ENCODE measurements at regions of chr15 and their contacts with region 1.

Region 1: DNA sequence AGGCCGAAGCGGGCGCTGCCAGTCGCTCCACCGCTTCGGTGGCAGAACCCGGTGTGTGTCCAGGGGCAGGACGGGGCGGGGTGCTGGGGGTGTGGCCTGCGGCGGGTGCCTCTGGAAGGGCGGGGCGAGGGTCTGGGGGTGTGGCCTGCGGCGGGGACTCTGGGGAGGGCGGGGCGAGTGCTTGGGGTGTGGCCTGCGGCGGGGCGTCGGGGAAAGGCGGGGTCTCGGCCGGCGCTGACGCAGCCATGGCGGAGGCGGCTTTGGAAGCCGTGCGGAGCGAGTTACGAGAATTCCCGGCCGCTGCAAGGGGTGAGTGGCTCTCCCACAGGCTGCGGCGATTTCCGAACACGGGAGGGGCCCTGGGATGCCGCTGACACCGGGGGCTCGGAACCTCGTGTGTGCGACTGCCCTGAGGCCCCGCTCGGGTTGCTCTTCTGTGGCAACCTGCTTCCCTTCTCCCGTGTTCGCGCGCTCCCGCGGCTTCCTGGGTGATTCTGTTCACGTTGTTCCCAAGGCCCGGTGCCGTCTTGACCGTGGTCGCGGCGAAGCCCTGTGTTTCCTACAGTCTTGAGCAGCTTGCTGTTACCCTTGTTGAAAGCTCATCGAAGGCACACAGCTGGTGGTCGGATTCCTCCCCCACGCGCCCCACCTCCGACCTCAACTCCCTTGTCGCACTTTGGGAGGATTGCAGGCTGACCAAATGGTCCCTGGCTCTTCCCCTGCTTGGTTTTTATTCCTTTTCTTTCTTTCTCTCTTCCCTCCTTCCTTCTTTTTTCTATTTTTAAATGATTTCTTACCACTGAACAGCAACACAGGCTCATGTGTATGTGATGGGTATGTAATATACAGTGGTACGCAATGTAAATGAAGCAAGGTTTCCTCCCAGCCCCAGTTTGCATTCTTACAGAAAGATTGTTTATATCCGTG is at the start of gene JMJD7:
- DNase-seq: peak; percentile 96 to 98 (median 96)
- ATAC-seq: peak; percentile 94 to 97 (median 96)
- H3K4me3 ChIP-seq: peak within 1 kb of the TSS; percentile 52 to 88 (median 76)
- H3K27ac ChIP-seq: peak within 1 kb of the TSS; percentile 22 to 89 (median 84)
- H3K4me1 ChIP-seq: peaks cover 0 to 26% (median 16%) of the 10 kb centered on the region in 12 donors
- H3K27me3 ChIP-seq: no peaks in the 10 kb centered on the region
- CTCF ChIP-seq: no peak
- POLR2A ChIP-seq: peak in 1 of 2 donors; percentile 85
- total RNA-seq, gene JMJD7: 5.4 to 17.9 (median 11.8) TPM

Region 2: GRCh38 chr15:41870689-41871081 is 42.5 kb after region 1 on chr15:
- intact Hi-C with region 1: loop called in 1 of 10 experiments (anchors 5 kb)
- DNase-seq: peak in 1 of 5 donors; percentile 74
- ATAC-seq: peak; percentile 26 to 58 (median 47)
- H3K4me3 ChIP-seq: no peak overlapping the region
- H3K27ac ChIP-seq: no peak overlapping the region
- H3K4me1 ChIP-seq: peaks cover 0 to 11% (median 0%) of the 10 kb centered on the region in 12 donors
- H3K27me3 ChIP-seq: no peaks in the 10 kb centered on the region
- CTCF ChIP-seq: no peak
- POLR2A ChIP-seq: no peak

Region 3: GRCh38 chr15:41894791-41895463 is 66.8 kb after region 1 on chr15:
- intact Hi-C with region 1: loop called in 8 of 10 experiments (anchors 2 to 5 kb)
- DNase-seq: peak; percentile 83 to 92 (median 90)
- ATAC-seq: peak; percentile 77 to 90 (median 85)
- H3K4me3 ChIP-seq: peak overlapping the region in 10 of 12 donors; percentile 20 to 67 (median 56)
- H3K27ac ChIP-seq: peak overlapping the region; percentile 18 to 96 (median 88)
- H3K4me1 ChIP-seq: peaks cover 9 to 35% (median 26%) of the 10 kb centered on the region in 12 donors
- H3K27me3 ChIP-seq: no peaks in the 10 kb centered on the region
- CTCF ChIP-seq: peak in 5 of 12 donors; percentile 19 to 48 (median 31)
- POLR2A ChIP-seq: no peak

Region 4: DNA sequence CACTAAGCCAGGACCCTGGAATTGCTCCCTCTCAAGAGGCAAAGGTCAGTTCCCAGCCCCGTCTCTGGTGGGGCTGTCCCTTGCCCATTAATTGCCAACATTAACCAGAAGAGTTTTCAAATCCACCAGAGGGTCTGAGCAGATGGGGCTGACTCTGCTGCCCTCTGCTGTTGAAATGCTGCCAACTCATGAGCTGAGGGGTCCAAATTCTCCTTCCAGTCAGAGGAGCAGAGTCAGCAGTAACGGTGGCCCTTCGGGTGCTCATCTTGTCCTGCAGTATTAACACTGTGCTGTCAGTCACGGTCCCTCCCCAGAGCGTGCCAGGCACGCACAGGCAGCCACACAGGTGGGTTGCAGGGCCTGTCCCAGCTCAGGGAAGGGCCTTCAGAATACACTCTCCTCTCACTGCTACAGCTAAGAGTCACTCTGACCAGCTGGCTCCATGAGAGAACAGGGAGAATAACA is 76.4 kb after region 1 on chr15:
- intact Hi-C with region 1: loop called in 4 of 10 experiments (anchors 5 kb)
- DNase-seq: peak in 4 of 5 donors; percentile 63 to 67 (median 65)
- ATAC-seq: peak; percentile 48 to 75 (median 64)
- H3K4me3 ChIP-seq: no peak overlapping the region
- H3K27ac ChIP-seq: peak overlapping the region in 9 of 12 donors; percentile 20 to 67 (median 42)
- H3K4me1 ChIP-seq: peaks cover 0 to 40% (median 21%) of the 10 kb centered on the region in 12 donors
- H3K27me3 ChIP-seq: no peaks in the 10 kb centered on the region
- CTCF ChIP-seq: peak; percentile 78 to 89 (median 83)
- POLR2A ChIP-seq: no peak